ENCODE measurements at regions of chr3 and their contacts with region 1.

Region 1: GRCh38 chr3:151327571-151328198 is 1.7 kb downstream of the P2RY13 start:
- H3K4me3 Mint-ChIP-seq: peak overlapping the region; percentile 80
- H3K27ac Mint-ChIP-seq: peak overlapping the region; percentile 80
- H3K4me1 Mint-ChIP-seq: peaks cover 78% of the 10 kb centered on the region
- H3K27me3 Mint-ChIP-seq: peaks cover 7% of the 10 kb centered on the region

Region 2: GRCh38 chr3:151156618-151157216 is 171.0 kb before region 1 on chr3:
- intact Hi-C with region 1: no loop called
- H3K4me3 Mint-ChIP-seq: no peak overlapping the region
- H3K27ac Mint-ChIP-seq: no peak overlapping the region
- H3K4me1 Mint-ChIP-seq: peaks cover 13% of the 10 kb centered on the region
- H3K27me3 Mint-ChIP-seq: no peaks in the 10 kb centered on the region

Region 3: GRCh38 chr3:151178208-151178845 is 149.4 kb before region 1 on chr3:
- intact Hi-C with region 1: no loop called
- H3K4me3 Mint-ChIP-seq: no peak overlapping the region
- H3K27ac Mint-ChIP-seq: no peak overlapping the region
- H3K4me1 Mint-ChIP-seq: peaks cover 34% of the 10 kb centered on the region
- H3K27me3 Mint-ChIP-seq: no peaks in the 10 kb centered on the region

Region 4: GRCh38 chr3:151290673-151291072 is 37.0 kb before region 1 on chr3:
- intact Hi-C with region 1: loop called (anchors 2 kb)
- H3K4me3 Mint-ChIP-seq: no peak overlapping the region
- H3K27ac Mint-ChIP-seq: no peak overlapping the region
- H3K4me1 Mint-ChIP-seq: peaks cover 22% of the 10 kb centered on the region
- H3K27me3 Mint-ChIP-seq: no peaks in the 10 kb centered on the region

Region 5: GRCh38 chr3:151350656-151351618 is 23.3 kb after region 1 on chr3:
- intact Hi-C with region 1: loop called (anchors 2 kb)
- H3K4me3 Mint-ChIP-seq: peak overlapping the region; percentile 26
- H3K27ac Mint-ChIP-seq: peak overlapping the region; percentile 83
- H3K4me1 Mint-ChIP-seq: peaks cover 50% of the 10 kb centered on the region
- H3K27me3 Mint-ChIP-seq: no peaks in the 10 kb centered on the region

Region 6: GRCh38 chr3:151362751-151363174 is 35.1 kb after region 1 on chr3:
- intact Hi-C with region 1: loop called (anchors 5 kb)
- H3K4me3 Mint-ChIP-seq: no peak overlapping the region
- H3K27ac Mint-ChIP-seq: peak overlapping the region; percentile 5
- H3K4me1 Mint-ChIP-seq: peaks cover 23% of the 10 kb centered on the region
- H3K27me3 Mint-ChIP-seq: no peaks in the 10 kb centered on the region

Region 7: GRCh38 chr3:151379083-151379734 is 51.5 kb after region 1 on chr3:
- intact Hi-C with region 1: no loop called
- H3K4me3 Mint-ChIP-seq: no peak overlapping the region
- H3K27ac Mint-ChIP-seq: no peak overlapping the region
- H3K4me1 Mint-ChIP-seq: peaks cover 28% of the 10 kb centered on the region
- H3K27me3 Mint-ChIP-seq: no peaks in the 10 kb centered on the region

Region 8: GRCh38 chr3:152695840-152696239 is 1368.2 kb after region 1 on chr3:
- intact Hi-C with region 1: no loop called
- H3K4me3 Mint-ChIP-seq: no peak overlapping the region
- H3K27ac Mint-ChIP-seq: no peak overlapping the region
- H3K4me1 Mint-ChIP-seq: no peaks in the 10 kb centered on the region
- H3K27me3 Mint-ChIP-seq: no peaks in the 10 kb centered on the region